ENCODE measurements at regions of chr15 and their contacts with region 1.

Region 1: DNA sequence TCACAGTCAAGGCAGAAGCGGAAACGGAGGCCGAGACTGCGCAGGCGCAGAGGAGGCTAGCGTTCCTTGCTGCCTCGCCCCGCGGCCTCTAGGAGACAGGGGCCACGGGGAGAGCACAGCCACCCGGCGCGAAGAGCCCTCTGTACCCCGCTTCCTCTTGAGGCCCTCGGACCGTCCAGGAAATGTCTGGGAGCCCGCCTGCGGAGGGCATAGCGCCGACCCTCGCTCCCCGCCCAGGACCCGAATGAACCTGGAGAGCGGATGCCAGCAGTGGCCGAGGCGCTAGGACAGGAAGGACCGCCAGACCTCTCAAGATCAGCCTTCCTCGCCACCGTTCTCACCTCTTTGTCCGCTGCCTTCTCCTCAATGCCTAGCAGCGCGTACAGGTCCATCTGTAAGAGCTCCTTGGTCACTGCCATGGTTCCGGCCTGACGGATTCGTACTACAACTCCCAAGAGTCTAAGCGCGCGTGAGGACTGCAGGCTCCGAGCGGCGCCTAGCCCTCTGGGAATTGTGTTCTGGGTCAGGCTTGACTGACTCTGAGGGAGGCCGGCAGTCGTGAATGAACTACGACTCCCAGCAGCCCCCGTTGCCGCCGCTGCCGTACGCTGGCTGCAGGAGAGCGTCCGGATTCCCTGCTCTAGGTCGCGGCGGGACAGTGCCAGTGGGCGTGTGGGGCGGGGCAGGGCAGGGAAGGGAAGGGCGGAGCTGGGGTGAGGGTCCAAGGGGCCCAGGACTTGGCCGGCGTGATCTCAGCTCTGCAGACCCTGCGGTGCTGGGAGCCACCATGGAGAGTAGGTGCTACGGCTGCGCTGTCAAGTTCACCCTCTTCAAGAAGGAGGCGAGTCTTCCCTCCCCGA is at the starts of genes DNAJC17 and ZFYVE19:
- H3K4me3 Mint-ChIP-seq: peak within 1 kb of the TSS; percentile 92
- H3K27ac Mint-ChIP-seq: peak within 1 kb of the TSS; percentile 97
- H3K4me1 Mint-ChIP-seq: peaks cover 39% of the 10 kb centered on the region
- H3K27me3 Mint-ChIP-seq: no peaks in the 10 kb centered on the region

Region 2: GRCh38 chr15:40754883-40755811 is 52.1 kb before region 1 on chr15 and contains the start of gene RMDN3:
- intact Hi-C with region 1: loop called (anchors 1 kb)
- H3K4me3 Mint-ChIP-seq: peak within 1 kb of the TSS; percentile 98
- H3K27ac Mint-ChIP-seq: peak within 1 kb of the TSS; percentile 96
- H3K4me1 Mint-ChIP-seq: peaks cover 17% of the 10 kb centered on the region
- H3K27me3 Mint-ChIP-seq: peaks cover 2% of the 10 kb centered on the region

Region 3: DNA sequence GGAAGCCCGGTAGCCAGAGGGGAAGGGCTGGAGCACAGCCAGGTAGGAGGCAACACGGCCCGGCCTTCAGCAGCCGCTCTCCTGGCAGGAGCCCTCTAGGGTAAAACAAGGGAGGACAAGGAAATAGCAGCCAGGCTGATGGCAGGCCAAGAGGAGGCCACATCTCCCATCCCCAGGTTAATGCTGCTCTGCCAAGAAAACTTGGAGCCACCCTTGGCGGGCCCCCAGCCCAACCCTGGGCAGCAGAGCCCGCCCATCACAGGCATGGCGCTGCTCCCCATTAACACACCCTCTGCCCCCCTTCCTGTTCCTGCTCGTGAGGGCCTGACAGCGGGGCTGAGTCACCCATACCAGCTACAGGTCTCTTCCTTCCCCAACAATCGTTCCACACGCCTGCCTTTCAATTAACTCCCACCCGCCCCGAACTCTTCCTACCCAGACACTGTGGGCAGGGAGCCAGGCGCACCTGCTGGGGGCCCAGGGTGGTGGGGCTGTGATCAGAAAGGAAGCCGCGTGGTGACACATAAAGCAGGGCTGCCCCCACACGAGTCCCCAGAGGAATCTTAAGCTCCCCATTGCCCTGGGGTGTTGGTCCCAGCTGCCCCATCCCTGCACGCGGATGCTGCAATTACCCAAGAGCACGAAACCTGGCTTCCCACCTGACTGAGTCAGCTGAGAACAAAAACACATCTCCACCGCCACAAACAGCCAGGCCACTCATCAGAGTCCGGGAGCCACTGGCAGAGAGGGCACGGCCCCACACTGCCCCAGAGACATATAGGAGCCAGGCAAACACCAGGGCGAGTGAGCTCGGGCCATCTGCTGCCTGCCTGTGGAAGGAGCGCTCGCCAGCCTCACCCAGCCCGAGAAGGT is 37.7 kb before region 1 on chr15 and contains the start of gene C15orf62:
- intact Hi-C with region 1: loop called (anchors 5 kb)
- H3K4me3 Mint-ChIP-seq: peak within 1 kb of the TSS; percentile 43
- H3K27ac Mint-ChIP-seq: peak within 1 kb of the TSS; percentile 82
- H3K4me1 Mint-ChIP-seq: peaks cover 52% of the 10 kb centered on the region
- H3K27me3 Mint-ChIP-seq: peaks cover 3% of the 10 kb centered on the region

Region 4: GRCh38 chr15:40843885-40844695 is 36.8 kb after region 1 on chr15 and contains the start of gene SPINT1:
- intact Hi-C with region 1: loop called (anchors 5 kb)
- H3K4me3 Mint-ChIP-seq: peak within 1 kb of the TSS; percentile 97
- H3K27ac Mint-ChIP-seq: peak within 1 kb of the TSS; percentile 93
- H3K4me1 Mint-ChIP-seq: peaks cover 44% of the 10 kb centered on the region
- H3K27me3 Mint-ChIP-seq: peaks cover 13% of the 10 kb centered on the region

Measured in dendritic cell treated with granulocyte-macrophage colony-stimulating factor and Interleukin-4, amounts not matched to agents 40 ng/mL and 50 ng/mL, for 4 days (primary cell).